ENCODE measurements at regions of chr2 and their contacts with region 1.

Region 1: DNA sequence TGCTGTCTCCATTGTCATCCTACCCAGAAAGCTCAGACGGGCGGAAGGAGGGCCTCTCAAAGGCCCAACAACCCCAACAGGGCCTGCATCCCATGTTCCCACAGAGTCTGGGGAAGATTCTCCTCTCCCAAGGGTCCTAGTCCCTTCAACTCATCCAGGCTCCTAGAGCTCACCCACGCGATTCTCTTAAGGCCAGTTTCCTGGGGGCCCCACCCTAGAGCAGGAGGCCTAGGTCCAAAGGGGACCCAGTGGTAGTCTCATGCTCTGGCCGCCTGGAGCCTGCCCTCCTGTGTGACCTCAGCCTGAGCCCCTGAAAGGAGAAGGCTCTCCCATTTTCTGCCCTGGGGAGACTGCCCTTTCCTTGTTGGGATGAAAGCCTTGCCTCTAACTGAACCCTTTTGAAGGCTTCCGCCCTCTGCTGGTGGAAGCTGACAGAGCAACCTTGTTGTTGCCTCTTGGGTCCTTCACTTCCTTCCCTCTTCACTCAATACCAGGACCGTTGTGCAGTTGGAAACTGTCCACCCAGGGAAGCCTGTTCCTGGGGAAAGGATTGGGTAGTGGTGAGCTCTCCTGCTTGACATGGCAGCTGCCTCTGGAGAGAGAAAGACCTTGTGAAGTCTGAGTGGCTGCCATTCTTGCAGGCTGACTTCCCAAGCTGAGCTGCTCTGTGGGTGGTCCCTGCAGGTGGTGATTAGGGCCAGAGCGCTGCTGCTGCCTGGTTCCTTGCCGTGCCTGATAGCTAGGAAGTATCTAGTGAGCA is 86.0 kb upstream of the ALPP start:
- DNase-seq: peak; percentile 74
- H3K4me3 Mint-ChIP-seq: no peak overlapping the region
- H3K27ac Mint-ChIP-seq: no peak overlapping the region
- H3K4me1 Mint-ChIP-seq: no peaks in the 10 kb centered on the region
- H3K27me3 Mint-ChIP-seq: no peaks in the 10 kb centered on the region
- CTCF ChIP-seq: peak; percentile 65

Region 2: GRCh38 chr2:231925303-231926179 is 367.0 kb before region 1 on chr2:
- CTCF ChIA-PET with region 1: no interaction called
- POLR2A ChIA-PET with region 1: no interaction called
- intact Hi-C with region 1: loop called (anchors 1 kb)
- DNase-seq: peak; percentile 85
- H3K4me3 Mint-ChIP-seq: peak overlapping the region; percentile 60
- H3K27ac Mint-ChIP-seq: no peak overlapping the region
- H3K4me1 Mint-ChIP-seq: no peaks in the 10 kb centered on the region
- H3K27me3 Mint-ChIP-seq: peaks cover 63% of the 10 kb centered on the region
- CTCF ChIP-seq: peak; percentile 91

Region 3: GRCh38 chr2:232306741-232307305 is 14.2 kb after region 1 on chr2:
- CTCF ChIA-PET with region 1: interaction called, 12 read pairs
- POLR2A ChIA-PET with region 1: interaction called, 4 read pairs
- intact Hi-C with region 1: no loop called
- DNase-seq: no peak
- H3K4me3 Mint-ChIP-seq: no peak overlapping the region
- H3K27ac Mint-ChIP-seq: no peak overlapping the region
- H3K4me1 Mint-ChIP-seq: no peaks in the 10 kb centered on the region
- H3K27me3 Mint-ChIP-seq: no peaks in the 10 kb centered on the region
- CTCF ChIP-seq: no peak

Region 4: DNA sequence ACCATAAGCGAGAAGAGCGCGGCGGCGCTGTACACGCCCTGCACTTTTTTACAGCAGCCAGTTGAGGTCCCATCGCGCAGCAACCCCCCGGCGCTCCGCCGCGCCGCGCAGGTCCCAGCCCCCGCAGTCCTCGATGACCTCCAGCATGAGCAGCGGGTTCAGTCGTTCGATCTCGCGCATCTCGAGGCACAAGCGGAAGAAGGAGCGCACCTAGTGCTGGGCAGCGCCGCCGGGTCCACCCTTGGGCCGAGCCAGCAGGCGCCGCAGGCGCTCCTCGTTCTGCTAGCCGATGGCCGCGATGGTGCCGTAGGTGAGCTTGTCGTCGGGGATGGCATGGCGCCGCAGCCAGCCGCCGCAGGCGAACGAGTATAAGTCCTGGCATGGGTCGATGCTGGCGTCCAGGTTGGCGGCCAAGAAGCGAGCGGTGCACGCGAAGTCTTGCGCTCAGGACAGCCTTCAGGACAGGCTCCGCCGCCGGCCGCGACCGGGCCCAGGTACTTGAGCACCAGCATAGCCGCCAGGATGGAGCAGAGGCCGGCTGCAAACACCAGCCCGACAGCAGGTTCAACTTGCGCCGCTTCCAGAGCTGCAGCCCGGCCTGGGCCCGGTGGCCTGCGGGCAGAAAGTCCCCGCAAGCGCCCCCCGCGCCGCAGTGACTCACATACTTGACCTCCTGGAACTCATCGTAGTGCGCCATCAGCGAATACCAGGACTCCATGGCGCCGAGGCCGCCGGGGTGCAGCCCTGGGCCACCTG is 94.3 kb after region 1 on chr2:
- CTCF ChIA-PET with region 1: no interaction called
- POLR2A ChIA-PET with region 1: no interaction called
- intact Hi-C with region 1: no loop called
- DNase-seq: no peak
- H3K4me3 Mint-ChIP-seq: no peak overlapping the region
- H3K27ac Mint-ChIP-seq: no peak overlapping the region
- H3K4me1 Mint-ChIP-seq: no peaks in the 10 kb centered on the region
- H3K27me3 Mint-ChIP-seq: peaks cover 60% of the 10 kb centered on the region
- CTCF ChIP-seq: no peak

Region 5: GRCh38 chr2:232432598-232433184 is 140.1 kb after region 1 on chr2:
- CTCF ChIA-PET with region 1: no interaction called
- POLR2A ChIA-PET with region 1: no interaction called
- intact Hi-C with region 1: no loop called
- DNase-seq: no peak
- H3K4me3 Mint-ChIP-seq: no peak overlapping the region
- H3K27ac Mint-ChIP-seq: no peak overlapping the region
- H3K4me1 Mint-ChIP-seq: no peaks in the 10 kb centered on the region
- H3K27me3 Mint-ChIP-seq: peaks cover 10% of the 10 kb centered on the region
- CTCF ChIP-seq: no peak